Heart right ventricle (tissue), 16 donors: ENCODE measurements at regions of chr17 and their contacts with region 1.

Region 1: GRCh38 chr17:79991140-79991923 is 44.3 kb downstream of the TBC1D16 start:
- DNase-seq: peak; percentile 80 to 83
- ATAC-seq: peak; percentile 79 to 92 (median 88)
- H3K4me3 ChIP-seq: peak overlapping the region; percentile 9 to 56 (median 51)
- H3K27ac ChIP-seq: peak overlapping the region in 7 of 10 donors; percentile 43 to 88 (median 87)
- H3K4me1 ChIP-seq: peaks cover 22 to 56% (median 45%) of the 10 kb centered on the region in 9 donors
- H3K27me3 ChIP-seq: no peaks in the 10 kb centered on the region
- CTCF ChIP-seq: peak; percentile 38 to 76 (median 60)

Region 2: GRCh38 chr17:79741751-79742588 is 249.4 kb before region 1 on chr17:
- intact Hi-C with region 1: loop called in 8 of 10 experiments (anchors 5 to 10 kb)
- DNase-seq: peak; percentile 68 to 80
- ATAC-seq: peak; percentile 56 to 76 (median 71)
- H3K4me3 ChIP-seq: peak overlapping the region in 5 of 10 donors; percentile 11 to 31 (median 17)
- H3K27ac ChIP-seq: no peak overlapping the region
- H3K4me1 ChIP-seq: peaks cover 3 to 20% (median 8%) of the 10 kb centered on the region in 9 donors
- H3K27me3 ChIP-seq: peaks cover 20 to 82% (median 72%) of the 10 kb centered on the region in 7 donors
- CTCF ChIP-seq: peak; percentile 90 to 98 (median 95)

Region 3: DNA sequence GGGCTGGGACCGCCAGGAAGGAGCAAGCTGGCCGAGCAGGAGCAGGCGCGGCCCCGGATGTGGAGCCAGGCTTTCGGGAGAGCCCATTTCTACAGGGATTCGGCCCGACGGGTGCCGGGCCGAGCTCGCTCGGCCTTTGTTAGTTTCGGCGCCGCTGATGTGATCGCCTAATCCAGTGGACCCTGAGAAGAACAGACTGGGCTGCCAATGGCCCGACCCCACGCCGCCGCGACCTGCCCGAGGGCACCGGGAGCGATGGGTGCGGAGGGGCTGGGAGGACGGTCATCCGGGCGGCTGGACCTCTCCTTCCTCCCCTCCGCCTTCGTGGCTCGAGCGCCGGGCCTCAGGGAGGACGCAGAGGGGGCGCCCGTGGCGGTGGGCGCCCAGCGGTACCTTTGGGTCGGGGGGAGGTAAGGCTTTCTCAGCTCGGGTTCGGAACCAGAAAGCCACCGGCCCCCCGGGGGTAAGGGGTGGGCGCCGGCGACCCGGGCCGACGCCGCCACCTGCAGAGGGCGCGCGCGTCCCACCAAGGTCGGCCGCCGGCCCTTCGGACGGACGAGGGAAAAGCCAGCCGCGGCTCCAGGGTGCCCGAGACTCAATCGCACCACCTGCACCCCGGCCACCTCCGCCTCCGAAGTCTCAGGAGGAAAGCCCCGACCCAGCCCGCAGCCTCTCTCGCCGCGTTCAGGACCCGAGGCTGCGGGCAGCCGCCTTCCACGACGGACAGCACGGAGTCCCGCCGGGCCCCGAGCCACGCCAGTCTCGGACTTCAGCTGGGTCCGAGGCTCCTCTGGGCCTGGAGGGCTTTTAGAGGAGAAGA is 201.6 kb before region 1 on chr17:
- intact Hi-C with region 1: loop called in 7 of 10 experiments (anchors 5 to 10 kb)
- DNase-seq: peak in 1 of 2 donors; percentile 55
- ATAC-seq: peak; percentile 32 to 71 (median 56)
- H3K4me3 ChIP-seq: peak overlapping the region in 4 of 10 donors; percentile 10 to 30 (median 17)
- H3K27ac ChIP-seq: no peak overlapping the region
- H3K4me1 ChIP-seq: peaks cover 16 to 59% (median 50%) of the 10 kb centered on the region in 9 donors
- H3K27me3 ChIP-seq: peaks cover 25 to 97% (median 86%) of the 10 kb centered on the region in 7 donors
- CTCF ChIP-seq: peak; percentile 66 to 88 (median 83)

Region 4: DNA sequence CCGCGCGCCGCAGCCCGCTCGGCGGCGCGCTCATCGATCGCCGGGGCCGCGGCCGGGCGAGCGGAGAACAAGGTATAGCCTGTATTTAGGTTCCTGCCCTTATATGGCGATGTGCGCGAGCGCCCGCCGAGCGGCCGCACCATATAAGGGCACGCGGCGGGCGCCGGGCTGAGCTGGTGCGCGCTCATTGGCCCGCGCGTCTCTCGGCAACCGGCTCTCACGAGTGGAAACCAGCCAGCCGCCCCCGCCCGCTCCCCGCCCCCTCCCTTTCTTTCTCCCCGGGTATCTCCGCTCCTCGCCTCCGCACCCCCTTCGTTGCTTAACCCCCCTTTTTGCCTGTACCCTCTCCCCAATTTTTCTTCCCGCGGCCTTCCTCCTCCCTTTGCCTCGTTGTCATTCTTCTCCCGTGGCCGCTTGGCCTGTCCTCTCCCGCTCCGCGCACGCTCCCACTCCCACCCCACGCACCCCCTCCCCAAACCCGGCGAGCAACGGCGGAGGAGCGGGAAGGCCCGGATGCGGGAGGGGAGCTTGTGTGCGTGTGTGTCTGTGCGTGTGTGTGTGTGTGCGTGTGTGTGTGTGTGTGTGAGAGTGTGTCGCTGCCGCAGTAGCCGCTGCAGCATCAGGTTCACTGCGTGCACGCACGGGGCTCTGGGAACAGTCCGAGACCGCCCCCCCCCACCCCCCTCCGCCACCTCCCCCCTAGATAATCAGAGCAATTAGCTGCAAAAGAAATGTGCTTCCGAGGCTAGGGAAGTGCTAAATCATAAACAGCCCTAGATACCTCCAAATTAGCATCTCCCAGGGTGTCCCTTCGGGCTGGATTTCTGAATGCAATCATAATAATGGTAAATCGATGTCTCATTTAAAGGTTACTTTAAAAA is 181.0 kb before region 1 on chr17:
- intact Hi-C with region 1: loop called in 1 of 10 experiments (anchors 5 kb)
- DNase-seq: peak; percentile 60 to 73
- ATAC-seq: peak; percentile 66 to 88 (median 78)
- H3K4me3 ChIP-seq: peak overlapping the region in 9 of 10 donors; percentile 5 to 39 (median 31)
- H3K27ac ChIP-seq: no peak overlapping the region
- H3K4me1 ChIP-seq: peaks cover 20 to 61% (median 43%) of the 10 kb centered on the region in 9 donors
- H3K27me3 ChIP-seq: peaks cover 48 to 96% (median 93%) of the 10 kb centered on the region in 7 donors
- CTCF ChIP-seq: no peak

Region 5: DNA sequence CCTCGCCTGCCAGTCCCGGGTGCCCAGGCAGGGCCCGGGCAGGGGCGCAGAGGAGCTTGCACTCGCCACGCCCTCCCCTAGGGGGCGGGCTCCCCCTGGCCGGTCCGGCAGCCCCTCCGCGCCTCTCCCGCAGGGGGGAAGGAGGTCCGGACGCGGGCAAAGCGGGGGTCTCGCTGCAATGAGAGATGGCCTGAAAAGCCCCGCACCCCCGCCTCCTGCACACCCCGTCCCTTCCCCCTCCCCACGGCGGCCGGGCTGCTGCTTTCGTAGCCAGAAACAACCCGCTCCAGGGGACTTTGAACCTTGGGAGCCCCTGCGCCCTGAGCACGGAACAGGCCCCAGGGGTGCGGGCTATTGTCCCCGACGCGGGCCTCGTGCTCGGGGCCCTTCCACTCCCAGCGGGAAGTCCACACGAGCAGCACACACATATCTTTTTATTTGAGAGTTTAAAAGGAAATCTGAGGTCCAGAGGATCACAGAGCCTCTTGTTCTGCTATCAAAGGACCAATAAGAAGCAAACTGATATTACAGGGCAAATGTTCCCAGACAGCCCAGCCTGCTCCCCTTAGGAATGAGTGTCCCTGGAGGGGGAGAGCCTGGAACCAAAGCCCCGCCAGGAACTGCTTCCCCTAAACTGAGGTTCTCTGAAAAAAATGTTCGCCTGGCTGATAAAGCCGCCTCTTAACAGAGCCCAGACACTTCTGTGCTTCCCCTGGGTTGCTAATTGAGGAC is 146.3 kb before region 1 on chr17:
- intact Hi-C with region 1: loop called in 3 of 10 experiments (anchors 5 to 10 kb)
- DNase-seq: peak; percentile 46 to 71
- ATAC-seq: peak; percentile 62 to 86 (median 78)
- H3K4me3 ChIP-seq: peak overlapping the region in 9 of 10 donors; percentile 57 to 80 (median 67)
- H3K27ac ChIP-seq: peak overlapping the region in 8 of 10 donors; percentile 44 to 81 (median 70)
- H3K4me1 ChIP-seq: peaks cover 19 to 59% (median 54%) of the 10 kb centered on the region in 9 donors
- H3K27me3 ChIP-seq: peaks cover 20 to 86% (median 34%) of the 10 kb centered on the region in 7 donors
- CTCF ChIP-seq: peak; percentile 70 to 83 (median 79)